Ovary (tissue), 10 donors: ENCODE measurements at regions of chrX and their contacts with region 1.

Region 1: DNA sequence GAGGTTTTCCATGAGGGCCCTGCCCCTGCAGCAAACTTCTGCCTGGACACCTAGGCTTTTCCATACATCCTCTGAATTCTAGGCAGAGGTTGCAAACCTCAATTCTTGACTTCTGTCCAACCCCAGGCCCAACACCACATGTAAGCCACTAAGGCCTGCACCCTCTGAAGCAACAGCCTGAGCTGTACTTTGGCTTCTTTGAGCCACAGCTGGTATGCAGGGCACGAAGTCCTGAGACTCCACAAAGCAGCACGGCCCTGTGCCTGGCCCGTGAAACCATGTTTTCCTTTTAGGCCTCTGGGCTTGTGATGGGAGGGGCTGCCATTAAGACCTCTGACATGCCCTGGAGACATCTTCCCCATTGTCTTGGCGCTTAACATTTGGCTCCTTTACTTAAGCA is 728.4 kb upstream of the FTHL17 start:
- DNase-seq: no peak
- H3K4me3 ChIP-seq: no peak overlapping the region
- H3K27ac ChIP-seq: no peak overlapping the region
- H3K4me1 ChIP-seq: no peaks in the 10 kb centered on the region
- H3K27me3 ChIP-seq: no peaks in the 10 kb centered on the region
- CTCF ChIP-seq: no peak
- EP300 ChIP-seq: no peak
- POLR2A ChIP-seq: no peak

Region 2: GRCh38 chrX:31858915-31859314 is 58.7 kb after region 1 on chrX:
- intact Hi-C with region 1: no loop called
- DNase-seq: no peak
- H3K4me3 ChIP-seq: no peak overlapping the region
- H3K27ac ChIP-seq: no peak overlapping the region
- H3K4me1 ChIP-seq: no peaks in the 10 kb centered on the region
- H3K27me3 ChIP-seq: no peaks in the 10 kb centered on the region
- CTCF ChIP-seq: no peak
- EP300 ChIP-seq: no peak
- POLR2A ChIP-seq: no peak

Region 3: DNA sequence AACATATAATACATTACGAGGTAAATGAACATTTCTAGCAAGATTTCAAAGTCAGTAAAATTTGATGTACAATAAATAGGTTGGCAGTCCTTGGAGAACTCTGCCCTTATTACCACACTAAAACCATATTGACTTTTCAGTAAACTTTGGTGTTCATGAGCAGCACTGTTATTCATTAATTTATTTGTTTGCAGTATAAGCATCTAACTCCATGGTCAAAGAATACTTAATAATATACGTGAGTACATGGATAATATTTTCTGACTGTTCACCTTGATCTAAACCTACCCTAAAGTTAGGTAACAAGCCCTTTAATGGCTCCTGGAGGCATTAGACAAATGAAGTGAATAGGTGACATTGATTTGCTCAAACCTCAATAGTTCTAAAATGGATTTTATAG is 88.9 kb after region 1 on chrX:
- intact Hi-C with region 1: loop called in 1 of 4 experiments (anchors 5 kb)
- DNase-seq: no peak
- H3K4me3 ChIP-seq: no peak overlapping the region
- H3K27ac ChIP-seq: no peak overlapping the region
- H3K4me1 ChIP-seq: no peaks in the 10 kb centered on the region
- H3K27me3 ChIP-seq: no peaks in the 10 kb centered on the region
- CTCF ChIP-seq: no peak
- EP300 ChIP-seq: no peak
- POLR2A ChIP-seq: no peak